ENCODE measurements at regions of chr6 and their contacts with region 1.

Region 1: GRCh38 chr6:121319112-121319553 is 15.1 kb downstream of the TBC1D32 start:
- DNase-seq: no peak
- H3K4me3 Mint-ChIP-seq: no peak overlapping the region
- H3K27ac Mint-ChIP-seq: no peak overlapping the region
- H3K4me1 Mint-ChIP-seq: peaks cover 22% of the 10 kb centered on the region
- H3K27me3 Mint-ChIP-seq: no peaks in the 10 kb centered on the region

Region 2: DNA sequence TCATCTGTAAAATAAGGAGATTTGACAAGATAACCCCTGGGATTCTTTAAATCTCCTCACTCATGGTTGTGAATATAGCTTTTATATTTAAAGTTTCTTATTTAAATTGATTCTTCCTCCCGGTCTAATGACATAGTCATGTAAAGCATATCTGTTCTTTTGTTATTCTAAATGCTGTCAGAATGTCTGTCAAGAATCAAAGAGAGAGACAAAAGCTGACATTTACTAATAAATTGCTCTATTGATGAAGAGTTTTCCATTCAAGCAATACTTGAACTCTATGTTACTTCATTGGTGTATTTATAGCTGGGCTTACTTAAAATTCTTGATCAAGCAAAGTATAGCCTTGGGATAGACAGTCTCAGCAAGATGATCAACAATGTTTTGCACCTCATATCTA is 850.6 kb before region 1 on chr6:
- CTCF ChIA-PET with region 1: no interaction called
- intact Hi-C with region 1: no loop called
- DNase-seq: no peak
- H3K4me3 Mint-ChIP-seq: no peak overlapping the region
- H3K27ac Mint-ChIP-seq: no peak overlapping the region
- H3K4me1 Mint-ChIP-seq: no peaks in the 10 kb centered on the region
- H3K27me3 Mint-ChIP-seq: no peaks in the 10 kb centered on the region

Region 3: DNA sequence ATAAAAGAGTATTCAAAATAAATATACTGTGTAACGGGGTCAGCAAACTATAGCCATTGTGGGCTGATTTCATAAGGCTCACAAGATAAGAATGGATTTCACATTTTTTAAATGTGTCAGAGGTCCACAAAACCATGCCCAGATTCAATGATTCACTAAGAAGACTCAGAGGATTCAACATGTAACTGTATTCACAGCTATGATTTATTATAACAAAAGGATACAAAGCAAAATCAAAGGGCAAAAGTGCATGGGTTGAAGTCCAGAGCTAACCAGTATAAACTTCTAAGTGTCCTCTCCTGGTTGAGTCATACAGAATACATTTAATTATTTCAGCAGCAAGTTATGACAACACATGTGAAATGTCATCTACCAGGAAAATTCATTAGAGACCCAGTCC is 34.1 kb before region 1 on chr6:
- CTCF ChIA-PET with region 1: no interaction called
- intact Hi-C with region 1: no loop called
- DNase-seq: no peak
- H3K4me3 Mint-ChIP-seq: no peak overlapping the region
- H3K27ac Mint-ChIP-seq: no peak overlapping the region
- H3K4me1 Mint-ChIP-seq: no peaks in the 10 kb centered on the region
- H3K27me3 Mint-ChIP-seq: no peaks in the 10 kb centered on the region

Region 4: GRCh38 chr6:121399966-121400365 is 80.8 kb after region 1 on chr6:
- CTCF ChIA-PET with region 1: interaction called, 3 read pairs
- intact Hi-C with region 1: loop called (anchors 2 kb)
- DNase-seq: no peak
- H3K4me3 Mint-ChIP-seq: no peak overlapping the region
- H3K27ac Mint-ChIP-seq: no peak overlapping the region
- H3K4me1 Mint-ChIP-seq: no peaks in the 10 kb centered on the region
- H3K27me3 Mint-ChIP-seq: no peaks in the 10 kb centered on the region